Head of caudate nucleus (tissue), 42 donors: ENCODE measurements at regions of chr7 and their contacts with region 1.

Region 1: DNA sequence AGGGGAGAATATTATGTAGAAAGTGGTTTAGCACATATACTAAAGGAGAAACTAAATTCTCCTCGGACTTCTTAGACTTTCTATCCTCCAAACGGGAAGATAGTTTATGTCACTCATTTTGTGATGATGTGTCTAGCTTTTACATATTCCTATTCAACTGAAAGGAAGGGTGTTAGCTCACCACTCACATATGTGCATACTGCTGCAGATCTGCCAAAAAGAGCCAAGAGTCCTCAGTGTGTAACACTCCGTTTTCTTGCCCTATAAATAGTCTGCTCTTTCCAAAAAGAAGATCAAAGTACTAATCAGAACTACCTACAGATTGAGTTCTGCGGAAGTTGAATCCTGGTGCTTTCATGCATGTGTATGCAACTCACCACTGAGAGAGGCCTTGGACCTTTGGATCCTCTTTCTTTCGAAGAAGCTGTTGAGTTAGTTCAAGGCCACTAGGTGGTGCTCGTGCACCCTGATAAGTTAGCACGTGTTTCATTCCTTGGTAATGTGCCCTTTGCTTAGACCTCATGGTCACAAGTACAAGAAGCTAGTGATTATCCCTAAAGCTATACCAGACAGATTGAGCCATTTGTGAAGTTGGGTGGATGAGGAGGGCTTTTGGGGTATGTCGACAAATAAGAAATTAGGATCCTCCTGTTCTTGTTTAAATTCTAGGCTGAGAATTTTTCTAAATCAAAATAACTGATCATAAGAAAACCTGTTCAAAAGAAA is 14.1 kb downstream of the YAE1 start:
- DNase-seq: peak; percentile 51 to 93 (median 82)

Region 2: DNA sequence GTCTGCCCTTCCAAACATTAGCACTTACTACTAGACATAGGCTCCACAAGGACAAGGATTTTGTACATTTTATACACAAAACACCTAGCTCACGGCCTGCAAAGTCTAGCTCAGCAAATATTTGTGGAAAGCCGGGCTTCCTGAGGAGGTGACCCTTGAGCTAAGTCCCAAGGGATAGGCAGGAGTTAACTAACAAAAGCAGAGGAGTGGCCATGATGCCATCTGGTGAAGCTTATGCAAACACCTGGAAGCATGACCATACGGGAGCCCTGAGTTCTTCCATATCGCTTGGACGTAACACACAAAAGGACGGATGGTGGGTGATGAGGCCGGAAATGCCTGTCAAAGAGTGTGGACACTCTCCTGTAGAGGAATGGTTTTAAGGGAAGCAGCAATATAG is 40.0 kb before region 1 on chr7:
- intact Hi-C with region 1: no loop called
- DNase-seq: no peak

Region 3: GRCh38 chr7:39605087-39605486 is 24.8 kb after region 1 on chr7:
- intact Hi-C with region 1: no loop called
- DNase-seq: no peak

Region 4: GRCh38 chr7:39746103-39746819 is 165.9 kb after region 1 on chr7:
- intact Hi-C with region 1: loop called (anchors 5 kb)
- DNase-seq: peak; percentile 65 to 93 (median 84)